Activated CD4-positive, alpha-beta memory T cell treated with anti-CD3 and anti-CD28 coated beads for 36 hours (primary cell): ENCODE measurements at regions of chr4 and their contacts with region 1.

Region 1: GRCh38 chr4:25234390-25235370 is 847 bp downstream of the PI4K2B start:
- DNase-seq: peak; percentile 59
- H3K4me3 Mint-ChIP-seq: peak overlapping the region; percentile 93
- H3K27ac Mint-ChIP-seq: peak overlapping the region; percentile 94
- H3K4me1 Mint-ChIP-seq: peaks cover 51% of the 10 kb centered on the region
- H3K27me3 Mint-ChIP-seq: no peaks in the 10 kb centered on the region

Region 2: GRCh38 chr4:25180524-25181131 is 54.1 kb before region 1 on chr4:
- CTCF ChIA-PET with region 1: interaction called, 9 read pairs
- POLR2A ChIA-PET with region 1: interaction called, 3 read pairs
- intact Hi-C with region 1: loop called (anchors 1 kb)
- DNase-seq: peak; percentile 43
- H3K4me3 Mint-ChIP-seq: no peak overlapping the region
- H3K27ac Mint-ChIP-seq: no peak overlapping the region
- H3K4me1 Mint-ChIP-seq: peaks cover 26% of the 10 kb centered on the region
- H3K27me3 Mint-ChIP-seq: no peaks in the 10 kb centered on the region

Region 3: DNA sequence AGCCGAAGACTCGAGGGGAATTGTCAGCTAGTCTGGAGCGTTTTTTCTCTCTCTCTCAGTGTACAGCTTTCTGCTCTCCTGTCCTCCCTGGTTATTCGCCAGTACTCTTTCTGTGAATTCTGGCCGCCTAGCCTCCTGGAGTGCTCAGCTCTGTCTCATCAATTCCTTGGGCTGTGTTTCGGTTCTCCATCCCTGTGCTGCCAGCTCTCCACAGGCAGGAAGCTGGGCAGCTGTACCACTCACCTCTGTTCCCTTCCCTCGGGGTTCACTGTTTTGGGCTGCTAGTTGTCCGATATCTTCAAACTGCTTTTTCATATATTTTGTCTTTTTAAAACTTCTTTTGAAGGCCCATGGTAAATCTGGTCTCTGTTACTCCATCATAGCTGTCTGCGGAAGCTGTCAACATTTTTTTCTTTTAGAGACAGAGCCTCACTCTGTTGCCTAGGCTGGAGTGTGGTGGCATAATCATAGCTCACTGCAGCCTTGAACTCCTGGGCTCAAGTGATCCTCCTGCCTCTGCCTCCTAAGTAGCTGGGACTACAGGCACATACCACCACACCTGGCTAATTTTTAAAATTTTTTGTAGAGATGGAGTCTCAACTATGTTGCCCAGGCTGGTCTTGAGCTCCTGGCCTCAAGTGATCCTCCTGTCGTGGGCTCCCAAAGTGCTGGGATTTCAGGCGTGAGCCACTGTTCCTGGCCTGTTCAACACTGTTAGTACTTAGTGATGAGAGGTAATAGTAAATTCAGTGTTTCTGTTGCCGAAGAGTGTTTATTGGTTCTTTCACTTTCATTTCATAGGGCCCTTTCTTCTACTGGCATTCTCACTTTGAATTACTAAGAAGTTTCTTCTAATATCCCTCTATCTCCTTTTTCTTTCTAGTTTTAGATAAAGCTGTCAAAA is 96.5 kb after region 1 on chr4:
- CTCF ChIA-PET with region 1: no interaction called
- POLR2A ChIA-PET with region 1: no interaction called
- intact Hi-C with region 1: loop called (anchors 1 kb)
- DNase-seq: no peak
- H3K4me3 Mint-ChIP-seq: peak overlapping the region; percentile 75
- H3K27ac Mint-ChIP-seq: peak overlapping the region; percentile 86
- H3K4me1 Mint-ChIP-seq: peaks cover 14% of the 10 kb centered on the region
- H3K27me3 Mint-ChIP-seq: no peaks in the 10 kb centered on the region